IMR-90 (cell line): ENCODE measurements at regions of chr5 and their contacts with region 1.

Region 1: DNA sequence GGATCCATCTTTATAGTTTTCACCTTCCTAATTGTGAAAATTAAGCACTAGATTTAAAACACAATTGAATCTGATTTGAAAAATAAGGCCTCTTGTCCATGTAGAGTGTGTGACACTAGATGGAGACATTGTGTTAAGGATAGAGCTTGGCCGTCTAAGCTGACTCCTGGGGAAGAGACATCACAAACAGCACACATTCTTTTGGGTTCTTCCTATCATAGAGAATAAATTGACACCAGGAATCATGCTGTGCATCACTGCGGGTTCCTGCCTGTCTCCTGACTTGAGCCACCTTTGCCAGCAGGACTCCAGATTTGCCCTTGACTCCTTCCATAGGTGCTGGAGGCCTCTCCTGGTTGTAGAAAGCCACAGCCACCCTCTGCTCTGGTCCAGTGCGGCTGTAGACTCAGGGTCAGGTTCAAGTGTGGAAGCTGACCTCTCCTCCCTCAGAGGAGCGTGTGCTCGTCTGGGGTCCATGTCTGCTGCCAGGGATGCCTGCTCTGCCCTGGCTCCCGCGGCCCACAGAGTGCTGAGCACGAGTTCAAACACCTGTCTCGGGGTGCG is 11.2 kb downstream of the ROPN1L start:
- DNase-seq: peak; percentile 95
- ATAC-seq: peak; percentile 80
- H3K4me3 ChIP-seq: no peak overlapping the region
- H3K27ac ChIP-seq: 0 out of 2 replicates have a peak overlapping the region, but pooled peaks have one; percentile 4
- H3K4me1 ChIP-seq: peaks cover 26% of the 10 kb centered on the region
- H3K27me3 ChIP-seq: no peaks in the 10 kb centered on the region
- CTCF ChIP-seq: peak; percentile 94
- POLR2A ChIP-seq: peak; percentile 41; the same call in 1 of the 2 replicates
- RAD21 ChIP-seq: peak; percentile 99

Region 2: DNA sequence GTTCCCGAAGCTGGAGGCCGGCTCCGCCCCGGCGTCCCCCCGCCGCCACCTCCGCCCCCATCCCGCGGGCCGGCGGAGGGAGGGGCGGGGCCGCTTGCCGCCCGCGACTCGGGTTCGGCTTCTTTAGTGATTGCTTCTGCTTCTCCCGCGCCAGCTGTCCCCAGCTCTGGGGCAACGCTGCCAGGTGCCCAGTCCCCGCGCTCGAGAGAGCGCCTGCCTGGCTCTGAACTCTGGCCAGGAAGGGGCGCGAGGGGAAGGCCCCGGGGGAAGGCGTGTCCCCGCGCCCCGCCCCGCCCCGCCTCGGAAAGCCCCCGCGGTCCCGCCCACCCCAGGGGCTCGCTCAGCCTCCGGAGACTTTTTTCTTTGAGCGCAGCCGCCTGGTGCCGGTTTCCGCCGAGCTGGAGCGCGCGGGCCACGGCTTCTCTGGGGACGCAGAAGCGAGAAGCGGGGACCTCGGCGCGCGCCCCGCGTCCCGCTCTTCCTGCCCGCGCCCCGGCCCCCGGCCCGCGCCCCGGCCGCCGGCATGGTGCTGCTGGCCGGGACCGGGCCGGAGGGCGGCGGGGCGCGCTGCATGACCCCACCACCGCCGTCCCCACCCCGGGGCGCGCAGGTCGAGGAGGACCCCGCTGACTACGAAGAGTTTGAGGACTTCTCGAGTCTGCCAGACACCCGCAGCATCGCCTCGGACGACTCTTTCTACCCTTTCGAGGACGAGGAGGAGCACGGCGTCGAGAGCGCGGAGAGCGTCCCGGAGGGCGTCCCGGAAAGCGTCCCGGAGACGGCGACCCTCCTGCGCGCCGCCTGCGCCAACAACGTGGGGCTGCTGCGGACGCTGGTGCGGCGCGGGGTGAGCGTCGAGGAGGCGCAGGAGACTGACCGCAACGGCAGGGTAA is 111.3 kb after region 1 on chr5 and contains the start of gene ANKRD33B:
- CTCF ChIA-PET with region 1: interaction called, 5 read pairs
- POLR2A ChIA-PET with region 1: no interaction called
- dilution Hi-C with region 1: no loop called
- in situ Hi-C with region 1: loop called (anchors 25 kb)
- intact Hi-C with region 1: loop called (anchors 1 kb)
- DNase-seq: peak; percentile 63
- ATAC-seq: peak; percentile 80
- H3K4me3 ChIP-seq: peak within 1 kb of the TSS; percentile 99
- H3K27ac ChIP-seq: peak within 1 kb of the TSS; percentile 86
- H3K4me1 ChIP-seq: peaks cover 28% of the 10 kb centered on the region
- H3K27me3 ChIP-seq: no peaks in the 10 kb centered on the region
- CTCF ChIP-seq: no peak
- POLR2A ChIP-seq: peak; percentile 80
- RAD21 ChIP-seq: no peak
- total RNA-seq, gene ANKRD33B: 2.5 and 2.8 TPM in 2 replicates

Region 3: GRCh38 chr5:10632110-10632761 is 179.4 kb after region 1 on chr5:
- CTCF ChIA-PET with region 1: interaction called, 34 read pairs
- POLR2A ChIA-PET with region 1: no interaction called
- dilution Hi-C with region 1: no loop called
- in situ Hi-C with region 1: loop called (anchors 5 kb)
- intact Hi-C with region 1: loop called (anchors 1 kb)
- DNase-seq: peak; percentile 59
- ATAC-seq: no peak
- H3K4me3 ChIP-seq: no peak overlapping the region
- H3K27ac ChIP-seq: no peak overlapping the region
- H3K4me1 ChIP-seq: peaks cover 10% of the 10 kb centered on the region
- H3K27me3 ChIP-seq: no peaks in the 10 kb centered on the region
- CTCF ChIP-seq: no peak
- POLR2A ChIP-seq: no peak
- RAD21 ChIP-seq: no peak

Region 4: DNA sequence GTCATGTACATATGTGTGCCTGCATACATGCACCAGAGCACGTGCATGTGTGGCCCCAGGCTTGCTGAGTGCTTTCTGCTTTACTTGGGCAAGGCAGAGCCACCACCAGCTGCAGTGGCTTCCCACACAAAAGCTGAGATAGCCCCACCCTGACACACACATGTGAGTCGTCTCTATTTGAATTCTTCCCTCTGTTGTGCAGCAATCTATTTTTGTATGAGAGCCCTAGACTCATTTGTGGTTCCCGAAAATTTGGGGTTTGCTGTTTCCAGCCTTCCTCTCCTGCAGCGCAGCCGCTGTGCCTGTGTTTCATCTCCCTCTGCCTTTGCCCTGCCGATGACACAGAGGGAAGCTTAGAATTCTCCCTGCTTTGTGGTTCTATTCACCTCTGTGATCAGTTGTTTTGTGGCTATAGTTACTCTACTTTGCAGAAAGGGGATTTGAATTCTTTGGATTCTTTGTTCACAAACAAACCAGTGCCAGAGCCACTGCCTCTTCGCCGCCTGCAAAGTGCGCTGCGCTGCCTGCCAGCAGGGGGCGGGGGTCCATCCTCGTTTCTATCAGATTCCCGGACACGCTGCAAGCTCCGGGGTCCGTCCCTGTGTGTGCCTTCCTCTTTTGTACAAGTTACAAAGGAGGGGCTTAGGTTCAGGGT is 404.0 kb after region 1 on chr5:
- CTCF ChIA-PET with region 1: no interaction called
- POLR2A ChIA-PET with region 1: no interaction called
- dilution Hi-C with region 1: no loop called
- in situ Hi-C with region 1: loop called (anchors 10 kb)
- intact Hi-C with region 1: loop called (anchors 2 kb)
- DNase-seq: peak; percentile 77
- ATAC-seq: peak; percentile 90
- H3K4me3 ChIP-seq: no peak overlapping the region
- H3K27ac ChIP-seq: peak overlapping the region; percentile 1; the same call in 1 of the 2 replicates
- H3K4me1 ChIP-seq: peaks cover 18% of the 10 kb centered on the region
- H3K27me3 ChIP-seq: no peaks in the 10 kb centered on the region
- CTCF ChIP-seq: peak; percentile 85
- POLR2A ChIP-seq: no peak
- RAD21 ChIP-seq: peak; percentile 65

Region 5: GRCh38 chr5:11182441-11183268 is 729.8 kb after region 1 on chr5:
- CTCF ChIA-PET with region 1: no interaction called
- POLR2A ChIA-PET with region 1: no interaction called
- dilution Hi-C with region 1: no loop called
- in situ Hi-C with region 1: loop called (anchors 10 kb)
- intact Hi-C with region 1: loop called (anchors 1 kb)
- DNase-seq: peak; percentile 47
- ATAC-seq: peak; percentile 69
- H3K4me3 ChIP-seq: no peak overlapping the region
- H3K27ac ChIP-seq: no peak overlapping the region
- H3K4me1 ChIP-seq: no peaks in the 10 kb centered on the region
- H3K27me3 ChIP-seq: no peaks in the 10 kb centered on the region
- CTCF ChIP-seq: peak; percentile 63
- POLR2A ChIP-seq: no peak
- RAD21 ChIP-seq: peak; percentile 72